Colonic mucosa (tissue), 4 donors: ENCODE measurements at regions of chr6 and their contacts with region 1.

Region 1: GRCh38 chr6:30102970-30103874 is 9.7 kb downstream of the TRIM31 start:
- DNase-seq: peak; percentile 96
- H3K4me3 ChIP-seq: peak overlapping the region; percentile 31
- H3K27ac ChIP-seq: peak overlapping the region; percentile 80
- H3K4me1 ChIP-seq: peaks cover 10% of the 10 kb centered on the region
- H3K27me3 ChIP-seq: no peaks in the 10 kb centered on the region
- CTCF ChIP-seq: peak; percentile 81

Region 2: DNA sequence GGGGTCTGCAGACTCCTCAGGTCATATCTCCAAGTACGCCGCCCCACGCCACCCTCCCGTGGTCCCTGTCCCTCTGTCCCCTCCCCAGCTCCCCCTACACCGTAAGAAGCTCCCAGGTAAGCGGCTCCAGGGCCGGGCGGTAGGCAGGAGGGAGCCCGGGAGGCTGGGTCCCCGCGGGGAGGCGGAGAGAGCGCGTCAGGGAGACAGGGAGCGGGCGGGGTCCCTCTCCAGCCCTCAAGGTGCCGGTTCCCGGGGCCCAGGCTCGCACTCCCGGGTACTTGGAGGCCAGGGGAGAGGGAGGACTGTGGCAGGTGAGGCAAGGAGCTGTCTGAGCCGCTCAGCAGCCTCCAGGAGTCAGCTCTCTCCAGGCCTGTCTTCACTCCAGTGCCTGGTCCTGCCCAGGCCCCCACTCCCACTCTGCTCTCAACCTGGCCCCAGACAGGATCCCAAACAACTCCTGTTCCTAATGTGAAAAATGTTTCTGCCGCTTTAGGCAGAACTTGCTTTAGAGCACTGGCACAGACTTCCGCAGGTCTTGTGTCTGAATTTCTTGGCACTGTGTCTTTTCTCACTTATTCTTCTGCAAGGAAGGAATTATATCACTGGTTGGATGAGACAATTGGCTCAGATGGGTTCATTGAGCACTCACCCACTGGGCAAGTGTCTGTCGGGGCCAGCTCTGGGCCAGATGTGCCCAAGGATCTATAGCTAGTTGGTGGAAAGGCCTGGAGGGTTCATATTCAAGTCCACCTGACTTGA is 239.0 kb before region 1 on chr6:
- intact Hi-C with region 1: no loop called
- DNase-seq: no peak
- H3K4me3 ChIP-seq: no peak overlapping the region
- H3K27ac ChIP-seq: no peak overlapping the region
- H3K4me1 ChIP-seq: no peaks in the 10 kb centered on the region
- H3K27me3 ChIP-seq: no peaks in the 10 kb centered on the region
- CTCF ChIP-seq: no peak

Region 3: DNA sequence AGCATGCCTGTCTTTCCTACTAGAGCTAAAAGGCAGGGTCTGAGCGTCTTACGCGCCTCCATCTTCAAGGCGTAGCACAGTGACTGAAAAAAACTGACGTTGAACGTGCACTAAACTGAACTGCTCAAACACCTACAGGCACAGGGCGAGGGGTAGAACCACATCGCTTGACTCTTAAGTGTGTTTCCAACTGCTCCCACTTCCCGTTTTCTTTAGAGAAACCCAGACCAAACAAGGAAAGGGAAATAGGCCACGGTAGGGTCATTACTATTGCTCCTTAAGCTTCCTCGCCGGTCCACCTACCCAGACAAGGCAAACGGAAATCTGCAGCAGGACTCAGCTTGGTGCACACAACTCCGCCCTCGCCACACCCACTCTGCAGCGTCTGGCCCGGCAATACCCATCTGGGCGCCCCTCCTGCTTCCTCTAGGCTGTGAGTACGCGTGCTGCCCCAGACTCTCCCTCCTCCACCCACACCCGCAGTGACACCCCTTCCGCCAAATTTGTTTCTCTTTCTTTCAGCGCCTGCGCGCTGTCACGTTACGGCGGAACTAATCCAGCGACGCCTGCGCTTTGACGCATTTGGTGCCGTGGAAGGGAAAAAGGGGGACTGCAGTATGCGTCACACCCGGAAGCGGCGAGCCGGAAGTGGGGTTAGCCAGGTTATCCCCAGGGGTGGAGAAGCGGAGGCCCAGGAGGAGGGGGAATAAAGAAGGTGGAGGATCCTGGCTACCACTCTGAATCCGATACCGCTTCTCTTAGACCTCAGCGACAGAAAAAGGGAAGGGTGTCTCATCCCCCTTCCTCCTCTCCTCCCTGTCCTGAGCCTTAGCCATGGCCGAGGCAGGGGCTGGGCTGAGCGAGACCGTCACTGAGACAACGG is 36.4 kb before region 1 on chr6 and contains the start of gene PPP1R11:
- intact Hi-C with region 1: loop called (anchors 5 kb)
- DNase-seq: peak; percentile 99
- H3K4me3 ChIP-seq: peak within 1 kb of the TSS; percentile 69
- H3K27ac ChIP-seq: peak within 1 kb of the TSS; percentile 93
- H3K4me1 ChIP-seq: no peaks in the 10 kb centered on the region
- H3K27me3 ChIP-seq: peaks cover 5% of the 10 kb centered on the region
- CTCF ChIP-seq: no peak
- total RNA-seq, gene PPP1R11: 77.9 to 87.1 TPM

Region 4: DNA sequence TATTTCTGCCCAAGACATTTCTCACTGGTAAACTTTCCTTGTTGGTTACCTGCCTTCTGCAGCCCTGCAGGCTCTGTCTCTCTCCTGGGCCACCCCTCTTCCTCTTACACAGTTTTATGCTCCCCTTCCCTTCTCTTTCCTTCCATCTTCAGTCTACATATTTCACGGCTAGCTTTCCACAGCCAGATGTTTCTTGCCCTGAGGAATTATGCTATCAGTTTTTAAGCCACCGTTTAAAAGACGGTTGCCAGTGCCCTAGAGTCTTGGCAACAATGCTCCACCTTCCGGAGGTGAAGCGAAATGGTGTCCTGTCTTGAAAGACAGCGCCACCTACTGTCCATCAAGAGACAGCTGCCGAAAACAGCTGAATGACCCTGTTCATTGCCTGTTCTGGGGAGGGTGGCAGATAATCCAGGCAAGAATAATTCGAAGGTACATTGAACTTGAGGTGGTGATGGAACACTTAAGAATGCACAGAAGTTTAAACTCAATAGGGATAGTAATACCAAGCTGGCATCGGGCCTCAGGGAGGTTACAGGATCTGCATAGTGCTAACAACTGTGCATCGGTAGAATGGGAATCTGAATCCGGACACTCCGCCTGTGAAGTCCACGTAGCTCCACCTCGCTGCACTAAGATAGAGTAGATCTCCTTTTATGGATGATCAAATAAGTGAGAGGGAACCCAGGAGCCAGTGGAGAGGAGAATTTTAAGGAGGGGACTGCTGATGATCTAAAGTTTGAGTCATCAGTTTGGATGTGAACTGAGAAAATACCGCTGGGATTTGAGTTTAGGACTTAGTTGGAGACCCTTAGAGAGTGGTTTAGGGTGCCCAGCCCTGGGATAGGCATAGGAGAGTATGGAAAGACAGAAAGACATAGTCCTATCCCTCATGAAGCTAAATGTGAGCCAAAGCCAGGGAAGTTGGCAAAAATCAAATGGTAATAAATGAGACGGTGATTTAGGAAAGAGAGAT is 28.0 kb after region 1 on chr6:
- intact Hi-C with region 1: loop called (anchors 2 kb)
- DNase-seq: peak; percentile 78
- H3K4me3 ChIP-seq: no peak overlapping the region
- H3K27ac ChIP-seq: peak overlapping the region; percentile 84
- H3K4me1 ChIP-seq: peaks cover 6% of the 10 kb centered on the region
- H3K27me3 ChIP-seq: no peaks in the 10 kb centered on the region
- CTCF ChIP-seq: peak; percentile 97

Region 5: GRCh38 chr6:30169658-30170614 is 66.7 kb after region 1 on chr6:
- intact Hi-C with region 1: loop called (anchors 5 kb)
- DNase-seq: peak; percentile 41
- H3K4me3 ChIP-seq: no peak overlapping the region
- H3K27ac ChIP-seq: no peak overlapping the region
- H3K4me1 ChIP-seq: peaks cover 4% of the 10 kb centered on the region
- H3K27me3 ChIP-seq: peaks cover 5% of the 10 kb centered on the region
- CTCF ChIP-seq: peak; percentile 77

Region 6: DNA sequence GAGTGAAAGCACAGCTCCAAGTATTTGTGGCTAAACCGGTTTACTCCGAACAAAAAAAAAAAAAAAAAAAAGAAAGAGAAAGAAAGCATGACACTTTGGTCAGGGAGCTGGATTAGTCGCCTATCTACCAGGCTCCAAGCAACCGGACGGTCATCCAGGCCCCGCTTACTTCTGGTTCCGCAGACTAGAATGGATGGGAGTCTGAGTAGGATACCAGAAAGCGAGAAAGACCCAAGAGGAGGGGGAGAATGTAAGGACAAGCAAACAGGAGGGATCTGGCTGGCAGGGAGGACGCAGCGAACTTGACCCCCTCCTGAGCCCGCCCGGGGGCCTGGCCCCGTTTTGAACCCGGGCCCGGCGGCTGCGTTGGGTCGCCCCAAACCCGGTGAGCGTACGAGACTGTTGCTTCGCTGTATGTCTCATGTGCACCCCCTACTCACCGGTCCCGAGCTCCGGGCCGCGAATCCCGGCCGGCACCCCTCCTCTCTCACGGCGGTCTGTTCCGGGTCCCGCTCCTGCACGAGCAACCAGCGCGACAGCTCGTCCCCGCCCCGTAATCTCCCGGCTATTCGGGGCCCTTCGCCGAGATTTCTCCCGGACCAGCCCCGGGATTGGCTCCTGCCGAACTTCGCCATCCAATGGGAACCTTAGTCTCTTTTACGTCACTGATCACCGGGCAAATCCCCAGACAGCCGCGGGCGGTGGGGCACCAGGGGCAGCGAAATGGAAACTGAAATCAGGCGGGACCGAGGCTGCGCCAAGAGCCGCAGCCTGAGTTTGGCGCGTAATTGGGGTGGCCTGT is 109.8 kb after region 1 on chr6 and contains the start of gene TRIM26:
- intact Hi-C with region 1: loop called (anchors 5 kb)
- DNase-seq: peak; percentile 98
- H3K4me3 ChIP-seq: peak within 1 kb of the TSS; percentile 91
- H3K27ac ChIP-seq: peak within 1 kb of the TSS; percentile 91
- H3K4me1 ChIP-seq: peaks cover 8% of the 10 kb centered on the region
- H3K27me3 ChIP-seq: no peaks in the 10 kb centered on the region
- CTCF ChIP-seq: no peak
- total RNA-seq, gene TRIM26: 48.2 to 53.5 TPM